ENCODE measurements at regions of chr20 and their contacts with region 1.

Region 1: GRCh38 chr20:37552415-37552814 is 24.7 kb upstream of the BLCAP start:
- DNase-seq: no peak
- H3K4me3 ChIP-seq: no peak overlapping the region
- H3K27ac ChIP-seq: no peak overlapping the region
- H3K4me1 ChIP-seq: no peaks in the 10 kb centered on the region
- H3K27me3 ChIP-seq: no peaks in the 10 kb centered on the region
- CTCF ChIP-seq: no peak
- EP300 ChIP-seq: no peak
- POLR2A ChIP-seq: no peak

Region 2: DNA sequence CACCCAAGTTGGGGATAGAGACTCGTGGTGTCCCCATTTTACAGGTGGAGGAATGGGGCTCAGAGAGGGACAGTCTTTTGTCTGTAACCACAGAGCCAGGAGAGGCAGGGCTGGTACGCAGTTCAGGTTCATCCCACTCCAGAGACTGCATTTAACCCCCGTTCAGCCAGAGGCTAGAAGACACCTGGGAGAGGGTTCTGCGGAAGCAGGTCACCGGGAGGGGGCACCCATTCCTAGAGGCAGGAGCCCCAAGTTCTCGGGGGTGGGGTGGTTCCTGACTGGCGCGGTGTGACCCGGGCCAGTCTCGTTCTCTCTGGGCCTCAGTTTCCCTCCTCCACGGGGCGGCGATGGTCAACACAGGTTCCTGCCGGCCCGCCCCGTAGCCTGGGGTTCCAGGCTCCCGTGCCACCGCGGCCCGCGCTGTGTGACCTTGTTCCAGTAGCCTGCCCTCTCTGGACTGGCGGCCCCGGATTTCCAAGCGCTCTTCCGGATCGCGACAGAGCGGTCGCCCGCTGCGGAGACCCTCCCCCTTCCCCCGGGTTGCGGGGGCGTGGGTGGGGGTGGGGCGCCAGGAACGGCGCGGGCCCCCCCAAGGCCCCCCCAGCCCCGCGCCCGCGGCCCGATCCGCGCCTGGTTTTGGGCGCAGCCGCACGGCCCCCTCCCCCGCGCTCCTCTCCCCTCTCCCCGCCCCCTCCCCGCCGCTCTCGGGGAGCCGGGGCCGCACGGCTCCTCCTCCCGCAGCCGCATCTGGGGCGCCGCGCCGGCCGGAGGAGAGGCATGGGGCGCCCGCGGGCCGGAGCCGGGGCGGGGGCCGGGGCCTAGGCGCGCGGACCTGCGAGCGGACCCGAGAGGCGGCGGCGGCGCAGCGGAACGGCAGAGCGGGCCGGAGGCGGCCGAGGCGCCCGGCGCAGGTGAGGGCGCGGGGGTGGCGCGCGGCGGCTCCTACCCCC is 1246.5 kb before region 1 on chr20 and contains the start of gene DLGAP4:
- intact Hi-C with region 1: loop called in 1 of 4 experiments (anchors 10 kb)
- DNase-seq: no peak
- H3K4me3 ChIP-seq: peak within 1 kb of the TSS; percentile 3
- H3K27ac ChIP-seq: no peak within 1 kb of the TSS
- H3K4me1 ChIP-seq: peaks cover 3% of the 10 kb centered on the region
- H3K27me3 ChIP-seq: no peaks in the 10 kb centered on the region
- CTCF ChIP-seq: no peak
- EP300 ChIP-seq: no peak
- POLR2A ChIP-seq: no peak
- total RNA-seq, gene DLGAP4: 18.2 to 75.9 (median 62.5) TPM

Region 3: DNA sequence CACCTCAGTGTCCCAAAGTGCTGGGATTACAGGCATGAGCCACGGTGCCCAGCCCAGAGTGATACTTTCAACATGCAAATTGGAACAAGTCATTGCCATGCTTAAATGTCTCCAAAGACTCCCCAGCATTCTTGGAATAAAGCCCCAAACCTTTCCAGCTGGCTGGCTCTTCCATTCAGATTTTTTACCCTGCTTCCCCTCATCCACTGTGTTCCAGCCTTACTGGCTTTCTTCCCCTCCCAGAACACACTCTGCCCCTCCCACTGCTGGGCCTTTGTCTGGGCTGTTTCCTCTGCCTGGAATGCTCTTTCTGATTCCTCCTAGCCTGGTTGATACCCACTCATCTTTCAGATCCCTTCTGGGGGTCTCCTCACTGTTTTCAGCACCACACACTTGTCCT is 71.5 kb before region 1 on chr20:
- intact Hi-C with region 1: no loop called
- DNase-seq: no peak
- H3K4me3 ChIP-seq: no peak overlapping the region
- H3K27ac ChIP-seq: no peak overlapping the region
- H3K4me1 ChIP-seq: no peaks in the 10 kb centered on the region
- H3K27me3 ChIP-seq: no peaks in the 10 kb centered on the region
- CTCF ChIP-seq: no peak
- EP300 ChIP-seq: no peak
- POLR2A ChIP-seq: no peak

Measured in ovary (tissue), 10 donors.